ENCODE measurements at regions of chr11 and their contacts with region 1.

Region 1: GRCh38 chr11:61816736-61817455 is at the start of gene FADS1:
- DNase-seq: peak; percentile 83
- ATAC-seq: peak; percentile 65
- H3K4me3 ChIP-seq: peak within 1 kb of the TSS; percentile 56 to 77 (median 70)
- H3K4me3 Mint-ChIP-seq: peak within 1 kb of the TSS; percentile 96
- H3K27ac ChIP-seq: no peak within 1 kb of the TSS
- H3K27ac Mint-ChIP-seq: peak within 1 kb of the TSS; percentile 83
- H3K4me1 ChIP-seq: peaks cover 9 to 24% of the 10 kb centered on the region in 2 donors
- H3K4me1 Mint-ChIP-seq: peaks cover 15% of the 10 kb centered on the region
- H3K27me3 ChIP-seq: peaks cover 0 to 17% (median 4%) of the 10 kb centered on the region in 4 experiments
- H3K27me3 Mint-ChIP-seq: no peaks in the 10 kb centered on the region
- CTCF ChIP-seq: peak; percentile 53
- total RNA-seq, gene FADS1: 14.8 and 15.6 TPM in 2 replicates

Region 2: GRCh38 chr11:61827571-61828378 is 10.9 kb after region 1 on chr11 and contains the start of gene FADS2:
- CTCF ChIA-PET with region 1: interaction called, 15 read pairs
- POLR2A ChIA-PET with region 1: interaction called, 8 read pairs
- intact Hi-C with region 1: loop called (anchors 1 kb)
- DNase-seq: peak; percentile 72
- ATAC-seq: peak; percentile 66
- H3K4me3 ChIP-seq: peak within 1 kb of the TSS; percentile 51 to 70 (median 62)
- H3K4me3 Mint-ChIP-seq: peak within 1 kb of the TSS; percentile 93
- H3K27ac ChIP-seq: peak within 1 kb of the TSS in 1 of 2 donors; percentile 45
- H3K27ac Mint-ChIP-seq: peak within 1 kb of the TSS; percentile 76
- H3K4me1 ChIP-seq: peaks cover 13 to 23% of the 10 kb centered on the region in 2 donors
- H3K4me1 Mint-ChIP-seq: peaks cover 17% of the 10 kb centered on the region
- H3K27me3 ChIP-seq: peaks cover 0 to 13% (median 2%) of the 10 kb centered on the region in 4 experiments
- H3K27me3 Mint-ChIP-seq: no peaks in the 10 kb centered on the region
- CTCF ChIP-seq: no peak
- total RNA-seq, gene FADS2: 5.9 and 7.0 TPM in 2 replicates

Region 3: DNA sequence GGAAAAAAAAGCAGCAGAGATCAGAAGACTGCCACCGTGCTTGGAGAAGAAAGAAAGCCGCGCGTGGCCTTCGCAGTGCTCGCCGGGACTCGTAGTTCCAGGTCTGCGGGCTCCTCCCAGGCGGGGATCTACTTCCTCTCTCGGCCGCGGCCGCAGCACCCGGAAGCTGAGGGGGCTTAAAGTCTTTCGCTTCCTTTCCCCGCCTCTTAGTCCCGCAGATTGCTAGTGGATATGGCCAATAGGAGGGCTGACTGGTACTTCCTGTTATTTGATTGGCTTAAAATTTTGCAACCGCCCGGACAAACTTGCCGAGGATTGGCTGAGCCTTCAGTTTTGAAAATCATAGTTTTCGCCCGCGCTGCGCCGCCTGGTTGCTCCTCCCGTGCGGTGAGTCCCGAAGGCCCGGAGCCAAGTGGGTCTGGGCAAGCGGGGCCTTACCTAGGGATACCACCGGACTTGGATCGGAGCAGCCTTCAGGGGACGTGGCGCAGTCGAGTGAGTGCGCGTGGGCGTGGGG is 306.8 kb after region 1 on chr11 and contains the start of gene INCENP:
- CTCF ChIA-PET with region 1: no interaction called
- POLR2A ChIA-PET with region 1: no interaction called
- intact Hi-C with region 1: loop called (anchors 5 kb)
- DNase-seq: peak; percentile 97
- ATAC-seq: peak; percentile 99
- H3K4me3 ChIP-seq: peak within 1 kb of the TSS; percentile 71 to 99 (median 93)
- H3K4me3 Mint-ChIP-seq: peak within 1 kb of the TSS; percentile 94
- H3K27ac ChIP-seq: peak within 1 kb of the TSS; percentile 52 to 67
- H3K27ac Mint-ChIP-seq: peak within 1 kb of the TSS; percentile 88
- H3K4me1 ChIP-seq: peaks cover 11 to 16% of the 10 kb centered on the region in 2 donors
- H3K4me1 Mint-ChIP-seq: peaks cover 30% of the 10 kb centered on the region
- H3K27me3 ChIP-seq: peaks cover 0 to 2% (median 0%) of the 10 kb centered on the region in 4 experiments
- H3K27me3 Mint-ChIP-seq: no peaks in the 10 kb centered on the region
- CTCF ChIP-seq: no peak
- total RNA-seq, gene INCENP: 34.0 and 37.8 TPM in 2 replicates

Region 4: DNA sequence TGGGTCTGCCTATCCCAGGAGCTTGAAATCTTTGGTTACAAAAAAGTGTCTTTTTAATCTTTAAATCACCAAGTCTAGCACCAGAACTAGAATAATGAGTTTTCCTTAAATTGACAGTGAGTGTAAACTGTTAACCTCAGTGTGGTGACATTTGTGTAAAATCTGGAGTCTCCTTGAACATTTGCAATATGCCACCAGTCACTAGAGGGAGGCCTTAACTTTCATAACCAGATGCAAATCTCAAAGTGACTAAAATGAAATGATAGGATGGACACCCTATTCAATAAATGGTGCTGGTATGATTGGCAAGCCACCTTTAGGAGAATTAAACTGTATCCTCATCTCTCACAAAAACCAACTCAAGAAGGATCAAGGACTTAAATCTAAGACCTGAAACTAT is 416.8 kb after region 1 on chr11:
- CTCF ChIA-PET with region 1: no interaction called
- POLR2A ChIA-PET with region 1: no interaction called
- intact Hi-C with region 1: no loop called
- DNase-seq: no peak
- ATAC-seq: no peak
- H3K4me3 ChIP-seq: no peak overlapping the region
- H3K4me3 Mint-ChIP-seq: no peak overlapping the region
- H3K27ac ChIP-seq: no peak overlapping the region
- H3K27ac Mint-ChIP-seq: no peak overlapping the region
- H3K4me1 ChIP-seq: no peaks in the 10 kb centered on the region
- H3K4me1 Mint-ChIP-seq: no peaks in the 10 kb centered on the region
- H3K27me3 ChIP-seq: peaks cover 0 to 15% (median 2%) of the 10 kb centered on the region in 4 experiments
- H3K27me3 Mint-ChIP-seq: peaks cover 47% of the 10 kb centered on the region
- CTCF ChIP-seq: no peak